ENCODE measurements at regions of chrX and their contacts with region 1.

Region 1: GRCh38 chrX:132219343-132219768 is at the start of gene RAP2C:
- DNase-seq: peak; percentile 67
- H3K4me3 ChIP-seq: peak within 1 kb of the TSS; percentile 82 to 91 (median 83)
- H3K27ac ChIP-seq: peak within 1 kb of the TSS; percentile 78
- H3K4me1 ChIP-seq: peaks cover 11% of the 10 kb centered on the region
- H3K27me3 ChIP-seq: no peaks in the 10 kb centered on the region
- CTCF ChIP-seq: peak; percentile 48 to 64
- POLR2A ChIP-seq: no peak
- total RNA-seq, gene RAP2C: 22.2 and 23.4 TPM in 2 replicates

Region 2: GRCh38 chrX:131308980-131309379 is 910.4 kb before region 1 on chrX:
- CTCF ChIA-PET with region 1: no interaction called
- POLR2A ChIA-PET with region 1: no interaction called
- dilution Hi-C with region 1: no loop called
- intact Hi-C with region 1: no loop called
- DNase-seq: no peak
- H3K4me3 ChIP-seq: no peak overlapping the region
- H3K27ac ChIP-seq: no peak overlapping the region
- H3K4me1 ChIP-seq: no peaks in the 10 kb centered on the region
- H3K27me3 ChIP-seq: no peaks in the 10 kb centered on the region
- CTCF ChIP-seq: no peak
- POLR2A ChIP-seq: no peak

Region 3: GRCh38 chrX:131830400-131831184 is 388.8 kb before region 1 on chrX:
- CTCF ChIA-PET with region 1: interaction called, 3 read pairs
- POLR2A ChIA-PET with region 1: no interaction called
- dilution Hi-C with region 1: no loop called
- intact Hi-C with region 1: loop called (anchors 1 kb)
- DNase-seq: peak; percentile 82
- H3K4me3 ChIP-seq: peak overlapping the region in 1 of 3 experiments; percentile 10
- H3K27ac ChIP-seq: peak overlapping the region; percentile 83
- H3K4me1 ChIP-seq: peaks cover 10% of the 10 kb centered on the region
- H3K27me3 ChIP-seq: no peaks in the 10 kb centered on the region
- CTCF ChIP-seq: peak; percentile 38 to 58
- POLR2A ChIP-seq: no peak

Region 4: GRCh38 chrX:131854581-131854980 is 364.8 kb before region 1 on chrX:
- CTCF ChIA-PET with region 1: interaction called, 17 read pairs
- POLR2A ChIA-PET with region 1: no interaction called
- dilution Hi-C with region 1: no loop called
- intact Hi-C with region 1: no loop called
- DNase-seq: peak; percentile 20
- H3K4me3 ChIP-seq: no peak overlapping the region
- H3K27ac ChIP-seq: no peak overlapping the region
- H3K4me1 ChIP-seq: no peaks in the 10 kb centered on the region
- H3K27me3 ChIP-seq: no peaks in the 10 kb centered on the region
- CTCF ChIP-seq: no peak
- POLR2A ChIP-seq: no peak

Region 5: GRCh38 chrX:132022967-132023895 is 196.1 kb before region 1 on chrX and contains the start of gene STK26:
- CTCF ChIA-PET with region 1: interaction called, 10 read pairs
- POLR2A ChIA-PET with region 1: no interaction called
- dilution Hi-C with region 1: no loop called
- intact Hi-C with region 1: loop called (anchors 1 kb)
- DNase-seq: peak; percentile 50
- H3K4me3 ChIP-seq: peak within 1 kb of the TSS; percentile 4 to 73 (median 45)
- H3K27ac ChIP-seq: peak within 1 kb of the TSS; percentile 6
- H3K4me1 ChIP-seq: peaks cover 4% of the 10 kb centered on the region
- H3K27me3 ChIP-seq: no peaks in the 10 kb centered on the region
- CTCF ChIP-seq: no peak
- POLR2A ChIP-seq: no peak
- total RNA-seq, gene STK26: 3.7 and 5.2 TPM in 2 replicates

Region 6: DNA sequence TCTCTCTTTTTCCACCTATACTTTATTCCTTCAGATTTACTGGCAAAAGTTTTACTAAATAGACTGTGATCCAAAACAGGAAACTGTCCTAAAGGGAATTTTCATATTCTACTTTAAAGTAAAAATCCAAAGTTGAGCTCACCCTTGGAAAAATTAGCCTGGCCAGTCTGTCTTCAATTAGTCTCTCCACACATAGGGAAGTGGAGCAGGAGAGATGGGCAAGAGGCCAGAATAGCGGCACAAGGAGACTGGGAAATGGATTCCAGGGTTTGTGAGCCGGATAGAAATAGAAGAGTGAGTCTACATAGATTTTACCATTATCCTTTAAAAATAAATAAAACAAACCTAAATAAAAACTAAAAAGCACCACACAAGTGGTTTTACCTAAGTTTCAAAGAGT is 75.3 kb before region 1 on chrX:
- CTCF ChIA-PET with region 1: no interaction called
- POLR2A ChIA-PET with region 1: no interaction called
- dilution Hi-C with region 1: no loop called
- intact Hi-C with region 1: no loop called
- DNase-seq: peak; percentile 7
- H3K4me3 ChIP-seq: no peak overlapping the region
- H3K27ac ChIP-seq: no peak overlapping the region
- H3K4me1 ChIP-seq: no peaks in the 10 kb centered on the region
- H3K27me3 ChIP-seq: no peaks in the 10 kb centered on the region
- CTCF ChIP-seq: no peak
- POLR2A ChIP-seq: no peak

Region 7: DNA sequence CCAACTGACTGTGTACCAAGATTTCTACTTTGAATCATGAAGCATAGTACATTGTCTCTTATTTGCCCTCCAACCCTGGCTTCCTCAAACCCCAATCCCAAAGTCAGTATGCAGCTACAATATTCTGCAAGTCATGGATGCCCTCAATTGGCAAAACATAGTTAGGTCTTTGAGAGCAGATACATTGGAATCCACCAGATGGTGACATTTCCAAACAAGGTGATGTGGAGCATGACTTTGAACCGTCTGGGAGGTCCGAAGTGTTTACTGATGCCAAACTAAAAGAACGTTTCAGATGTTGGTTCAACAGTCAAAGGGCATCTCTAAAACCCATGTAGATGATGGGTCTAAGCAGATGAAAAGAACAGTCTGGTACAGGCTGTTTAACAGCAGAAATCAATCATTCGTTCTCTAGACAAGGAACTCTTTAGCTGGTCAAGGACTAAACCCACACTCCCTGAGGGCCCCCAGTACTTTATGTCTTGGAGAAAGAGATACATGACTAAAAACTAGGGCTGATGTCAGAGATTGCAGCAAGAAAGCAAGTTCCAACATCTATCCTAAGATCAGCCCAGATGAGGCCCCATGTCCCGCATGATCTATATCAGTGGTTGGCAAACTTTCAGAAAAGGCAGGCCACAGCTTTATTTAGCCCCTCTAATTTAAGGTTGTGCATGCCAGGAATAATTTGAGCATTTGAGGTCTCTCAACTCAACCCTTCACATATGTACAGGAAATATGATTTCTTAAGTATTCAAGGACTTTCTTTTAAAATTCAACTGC is 47.7 kb before region 1 on chrX:
- CTCF ChIA-PET with region 1: interaction called, 23 read pairs
- POLR2A ChIA-PET with region 1: no interaction called
- dilution Hi-C with region 1: no loop called
- intact Hi-C with region 1: loop called (anchors 1 kb)
- DNase-seq: peak; percentile 30
- H3K4me3 ChIP-seq: no peak overlapping the region
- H3K27ac ChIP-seq: no peak overlapping the region
- H3K4me1 ChIP-seq: no peaks in the 10 kb centered on the region
- H3K27me3 ChIP-seq: peaks cover 0 to 2% of the 10 kb centered on the region in 2 experiments
- CTCF ChIP-seq: peak in 1 of 2 donors; percentile 16
- POLR2A ChIP-seq: no peak

Region 8: DNA sequence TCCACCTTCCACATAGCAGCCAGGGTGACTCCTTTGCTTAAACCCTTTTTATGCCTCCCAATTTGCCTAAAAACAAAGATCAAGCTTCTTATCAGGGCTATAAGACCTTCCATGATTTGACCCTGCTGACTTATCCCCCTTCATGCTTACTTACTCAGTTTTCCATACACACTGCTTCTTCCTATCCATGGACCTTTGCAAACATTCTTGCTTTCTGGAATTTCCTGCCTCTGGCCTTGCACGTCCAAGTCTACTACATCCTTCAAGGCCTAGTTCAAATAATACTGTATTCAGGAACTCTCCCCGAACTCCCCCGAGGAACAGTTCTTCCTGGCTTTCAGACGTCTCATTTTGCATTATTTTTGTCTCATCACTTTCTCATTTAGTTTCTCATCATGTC is 31.9 kb before region 1 on chrX:
- CTCF ChIA-PET with region 1: no interaction called
- POLR2A ChIA-PET with region 1: no interaction called
- dilution Hi-C with region 1: no loop called
- intact Hi-C with region 1: loop called (anchors 1 kb)
- DNase-seq: peak; percentile 73
- H3K4me3 ChIP-seq: no peak overlapping the region
- H3K27ac ChIP-seq: peak overlapping the region; percentile 52
- H3K4me1 ChIP-seq: peaks cover 21% of the 10 kb centered on the region
- H3K27me3 ChIP-seq: no peaks in the 10 kb centered on the region
- CTCF ChIP-seq: no peak
- POLR2A ChIP-seq: no peak

Region 9: DNA sequence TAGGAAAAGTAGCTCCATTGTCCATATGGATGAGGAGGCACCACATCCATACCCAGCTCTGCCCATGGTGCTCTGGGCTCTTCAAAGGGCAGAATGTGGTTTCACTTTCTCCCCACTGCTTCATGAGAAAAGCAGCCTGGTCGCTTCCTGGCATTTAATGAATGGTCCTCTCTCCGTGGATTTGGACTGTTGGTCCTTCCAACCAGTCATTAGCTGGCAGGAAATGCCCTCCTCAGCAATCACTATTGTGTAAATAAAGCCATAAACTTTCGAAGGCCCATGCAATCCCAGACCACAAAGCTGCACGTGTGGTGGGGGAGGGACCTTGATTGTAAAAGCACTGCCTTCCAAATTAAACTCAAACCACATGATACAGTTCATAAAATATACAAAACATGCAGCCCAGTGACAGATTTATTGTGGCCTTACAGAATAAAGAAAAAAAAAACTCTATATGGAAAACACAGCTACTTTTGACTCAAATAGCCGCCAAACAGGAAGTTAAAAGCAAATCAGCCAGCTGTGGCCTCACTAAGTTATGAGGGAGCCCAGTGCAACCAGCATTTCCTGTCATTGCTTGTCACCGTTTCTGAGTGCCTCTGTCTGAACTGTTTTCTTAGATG is 261.3 kb after region 1 on chrX:
- CTCF ChIA-PET with region 1: no interaction called
- POLR2A ChIA-PET with region 1: no interaction called
- dilution Hi-C with region 1: no loop called
- intact Hi-C with region 1: loop called (anchors 5 kb)
- DNase-seq: peak; percentile 80
- H3K4me3 ChIP-seq: peak overlapping the region in 1 of 3 experiments; percentile 45
- H3K27ac ChIP-seq: peak overlapping the region; percentile 72
- H3K4me1 ChIP-seq: peaks cover 12% of the 10 kb centered on the region
- H3K27me3 ChIP-seq: no peaks in the 10 kb centered on the region
- CTCF ChIP-seq: no peak
- POLR2A ChIP-seq: no peak

Measured in endothelial cell of umbilical vein (primary cell).